ENCODE measurements at regions of chr5 and their contacts with region 1.

Region 1: DNA sequence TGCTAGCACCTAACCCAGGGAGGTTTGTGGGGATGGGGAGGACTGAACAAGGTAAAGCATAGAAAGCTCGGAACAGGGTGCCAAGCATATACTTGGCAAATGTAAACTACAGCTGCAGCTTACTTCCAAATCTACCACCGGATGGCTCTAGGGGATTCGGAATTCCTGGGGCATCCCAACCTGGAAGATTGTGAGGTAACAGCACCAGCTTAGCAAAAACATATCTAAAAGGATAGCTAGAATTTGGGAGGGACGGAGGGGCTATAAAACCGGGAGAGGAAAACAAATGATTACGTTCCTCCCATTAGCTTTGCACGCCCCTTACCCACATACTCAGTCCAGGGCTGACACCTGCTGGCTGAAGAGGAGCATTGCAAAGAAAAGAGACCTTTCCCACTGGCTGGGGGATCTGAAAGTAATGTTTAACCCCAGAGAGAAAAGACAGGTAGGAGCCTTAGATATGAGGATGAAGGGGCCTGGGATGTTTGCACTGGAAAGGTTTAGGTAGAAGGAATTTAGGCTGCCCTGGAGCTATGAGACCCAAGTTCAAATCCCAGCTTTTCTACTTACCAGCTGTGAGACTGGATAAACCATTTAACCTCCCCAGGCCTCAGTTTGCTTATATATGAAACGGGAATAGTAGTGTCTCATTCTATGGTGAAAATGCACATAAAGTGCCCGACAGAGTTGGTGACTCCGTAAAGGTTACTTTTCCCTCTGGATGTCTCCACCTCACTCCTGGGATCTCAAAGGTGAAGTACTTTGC is 73.6 kb downstream of the FAM114A2 start:
- DNase-seq: no peak
- ATAC-seq: peak; percentile 75

Region 2: DNA sequence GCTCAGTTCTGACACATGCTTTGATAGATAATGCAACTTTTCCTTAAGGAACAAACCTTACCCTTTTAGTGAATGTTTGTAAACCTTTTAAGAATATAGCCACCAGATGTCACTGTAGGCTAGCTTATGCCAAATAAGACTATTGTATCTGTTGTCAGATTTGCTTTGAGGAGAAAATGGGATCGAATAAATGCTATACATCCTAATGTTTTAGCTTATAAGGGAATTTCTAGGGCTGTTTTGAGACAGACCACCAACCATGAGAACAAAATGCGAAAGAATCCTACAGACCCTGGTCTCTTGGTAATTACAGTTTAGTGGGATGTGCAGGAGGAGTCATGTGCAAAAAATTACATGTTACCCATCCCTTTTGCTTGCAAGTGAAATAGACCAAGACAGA is 1432.3 kb before region 1 on chr5:
- intact Hi-C with region 1: loop called (anchors 2 kb)
- DNase-seq: no peak
- ATAC-seq: no peak

Region 3: DNA sequence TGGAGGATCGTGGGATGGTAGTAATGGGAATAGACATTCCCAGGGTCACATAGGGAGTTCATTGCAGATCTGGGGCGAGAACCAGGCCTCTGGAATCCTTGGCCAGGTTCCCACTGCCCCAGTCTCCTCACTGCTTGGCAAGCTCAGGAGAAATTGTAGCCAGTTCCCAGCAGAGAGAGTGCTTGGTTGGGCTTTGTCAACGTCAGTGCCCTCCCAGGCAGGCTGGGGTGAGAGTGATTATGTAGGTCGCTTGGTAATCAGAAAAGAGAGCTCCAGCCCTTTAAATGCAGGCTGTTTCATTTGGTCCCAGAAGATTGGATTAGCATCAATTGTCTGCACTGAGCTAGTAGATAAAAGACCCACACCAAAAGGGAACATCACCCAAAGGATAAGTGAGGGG is 173.6 kb after region 1 on chr5:
- intact Hi-C with region 1: no loop called
- DNase-seq: peak; percentile 72
- ATAC-seq: peak; percentile 90

Region 4: DNA sequence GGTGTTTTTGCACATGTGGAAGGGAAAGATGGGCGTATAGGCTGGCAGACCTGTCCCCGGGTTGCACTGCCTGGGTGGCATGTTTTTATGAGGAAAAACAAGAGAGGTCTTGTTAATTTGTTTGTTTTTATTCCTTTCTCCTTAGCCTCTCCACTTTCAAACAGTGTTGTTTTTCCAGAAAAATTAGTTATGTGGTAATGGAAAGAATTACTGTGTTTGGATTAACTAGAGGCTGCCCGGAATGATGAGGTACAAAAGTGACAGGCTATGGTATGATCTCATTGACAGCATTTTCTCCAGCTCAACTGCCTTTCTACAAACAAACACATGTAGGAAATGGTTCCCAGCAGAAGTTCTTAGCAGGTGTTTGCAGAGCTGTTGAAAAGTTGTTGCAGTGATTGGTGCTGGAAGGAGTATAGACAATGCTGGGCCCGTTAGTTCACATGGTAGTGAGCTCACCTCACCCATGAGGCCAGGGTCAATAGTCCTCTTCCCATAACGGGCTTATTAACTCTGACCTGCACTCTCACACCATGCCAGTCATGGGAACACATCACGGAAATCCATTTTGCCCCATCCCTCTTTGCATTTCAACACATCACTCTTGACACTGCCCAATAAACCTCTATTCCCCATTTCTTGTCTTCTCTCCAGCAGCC is 369.5 kb after region 1 on chr5:
- intact Hi-C with region 1: no loop called
- DNase-seq: no peak
- ATAC-seq: no peak

Region 5: GRCh38 chr5:154345255-154345952 is 380.3 kb after region 1 on chr5:
- intact Hi-C with region 1: no loop called
- DNase-seq: no peak
- ATAC-seq: no peak